ENCODE measurements at regions of chr6 and their contacts with region 1.

Region 1: DNA sequence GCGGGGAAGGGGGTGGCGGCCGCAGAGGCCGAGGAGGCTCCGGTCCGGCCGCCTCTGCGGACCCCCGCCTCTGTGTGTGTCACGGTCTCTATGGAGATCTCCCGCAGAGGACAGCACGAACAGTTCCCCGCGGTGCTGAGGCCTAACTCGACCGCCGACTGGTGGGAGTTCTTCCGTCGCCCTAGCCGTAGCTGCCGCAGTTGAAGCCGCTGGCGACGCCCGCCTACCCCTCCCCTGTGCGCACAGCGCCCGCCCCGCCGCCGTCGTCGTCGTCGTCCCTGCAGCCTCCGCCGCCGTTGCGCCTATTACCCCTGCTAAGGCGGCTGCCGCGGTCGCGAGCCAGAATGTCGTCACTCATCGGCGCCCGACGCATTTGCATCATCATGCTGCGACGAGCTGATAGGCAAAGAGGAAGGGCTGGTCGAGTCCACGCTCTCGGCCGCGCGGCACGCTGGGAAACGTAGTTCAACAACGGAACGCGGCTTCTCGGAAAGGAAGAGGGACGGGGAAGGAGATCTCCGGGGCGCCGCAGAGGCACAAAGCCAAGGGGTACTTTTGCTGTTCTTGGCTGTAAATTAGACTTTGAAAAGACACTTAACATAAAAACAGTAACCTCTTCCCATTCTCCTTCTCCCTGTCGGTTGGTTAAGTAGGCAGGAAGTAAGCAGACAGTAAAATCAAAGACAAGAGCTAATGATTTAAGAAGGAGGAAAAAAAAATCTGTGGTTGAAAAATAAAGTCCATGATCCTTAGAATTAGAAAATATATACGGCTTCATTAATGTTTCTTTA is at the start of gene NUP153:
- DNase-seq: peak; percentile 94 to 99
- H3K4me3 ChIP-seq: peak within 1 kb of the TSS; percentile 79 to 100
- H3K27ac ChIP-seq: peak within 1 kb of the TSS; percentile 99 to 100
- H3K4me1 ChIP-seq: peaks cover 5 to 18% of the 10 kb centered on the region in 2 donors
- H3K27me3 ChIP-seq: no peaks in the 10 kb centered on the region
- CTCF ChIP-seq: no peak
- total RNA-seq, gene NUP153: 11.8 TPM

Region 2: DNA sequence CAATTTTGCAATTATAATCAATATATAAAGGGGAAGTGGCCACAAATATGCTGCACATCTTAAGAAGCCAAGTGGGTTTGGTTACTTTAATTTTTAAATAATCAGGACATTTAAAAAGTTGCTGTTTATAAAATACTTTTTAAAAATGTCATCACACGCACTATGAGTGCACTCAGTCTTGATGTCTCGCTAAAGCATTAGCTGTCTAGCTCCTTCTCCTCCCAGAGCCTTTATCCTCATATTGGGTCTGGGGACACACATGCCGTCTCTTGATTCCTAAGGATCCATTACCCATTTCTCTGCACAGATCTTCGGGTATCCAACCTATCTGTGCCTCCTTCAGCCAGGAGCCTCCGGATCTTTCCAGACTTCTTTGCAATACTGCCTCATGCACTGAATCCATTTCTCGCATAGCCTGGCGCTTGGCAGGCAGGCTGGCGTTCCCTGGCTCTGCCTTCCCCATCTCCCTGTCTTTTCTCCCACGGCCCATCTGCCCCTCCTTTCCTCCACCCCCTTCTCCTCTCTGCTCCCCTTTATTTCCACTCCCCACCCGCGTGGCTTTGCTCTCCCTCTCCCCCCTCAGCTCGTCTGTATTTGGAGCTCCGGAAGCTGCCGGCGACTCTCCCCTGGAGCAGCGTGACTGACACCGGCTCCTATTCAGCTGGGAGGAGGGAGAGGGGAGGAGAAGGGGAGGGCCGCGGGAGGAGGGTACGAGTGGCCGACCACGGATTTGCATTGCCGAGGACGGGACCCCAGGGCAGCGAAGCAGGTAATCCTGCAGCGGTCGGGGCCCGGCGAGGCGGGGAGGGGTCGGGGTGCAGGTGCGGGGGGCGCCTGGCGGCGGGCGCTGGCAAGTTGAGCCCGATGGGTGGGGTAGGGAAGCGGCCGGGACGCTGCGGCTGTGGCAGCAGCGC is 313.5 kb before region 1 on chr6 and contains the start of gene CAP2:
- intact Hi-C with region 1: loop called (anchors 10 kb)
- DNase-seq: peak in 1 of 2 donors; percentile 81
- H3K4me3 ChIP-seq: peak within 1 kb of the TSS; percentile 81 to 94
- H3K27ac ChIP-seq: peak within 1 kb of the TSS; percentile 75 to 87
- H3K4me1 ChIP-seq: peaks cover 0 to 10% of the 10 kb centered on the region in 2 donors
- H3K27me3 ChIP-seq: no peaks in the 10 kb centered on the region
- CTCF ChIP-seq: no peak
- total RNA-seq, gene CAP2: 7.1 TPM

Region 3: GRCh38 chr6:17599885-17600526 is 106.8 kb before region 1 on chr6 and contains the start of gene FAM8A1:
- intact Hi-C with region 1: loop called (anchors 1 kb)
- DNase-seq: peak; percentile 74 to 96
- H3K4me3 ChIP-seq: peak within 1 kb of the TSS; percentile 94 to 98
- H3K27ac ChIP-seq: peak within 1 kb of the TSS; percentile 94 to 97
- H3K4me1 ChIP-seq: peaks cover 0 to 4% of the 10 kb centered on the region in 2 donors
- H3K27me3 ChIP-seq: no peaks in the 10 kb centered on the region
- CTCF ChIP-seq: peak; percentile 53 to 74 (median 56)
- total RNA-seq, gene FAM8A1: 31.5 TPM

Region 4: GRCh38 chr6:17638212-17638715 is 68.5 kb before region 1 on chr6:
- intact Hi-C with region 1: loop called (anchors 5 kb)
- DNase-seq: no peak
- H3K4me3 ChIP-seq: peak overlapping the region in 1 of 2 donors; percentile 35
- H3K27ac ChIP-seq: peak overlapping the region; percentile 20 to 69
- H3K4me1 ChIP-seq: peaks cover 0 to 17% of the 10 kb centered on the region in 2 donors
- H3K27me3 ChIP-seq: no peaks in the 10 kb centered on the region
- CTCF ChIP-seq: no peak

Region 5: DNA sequence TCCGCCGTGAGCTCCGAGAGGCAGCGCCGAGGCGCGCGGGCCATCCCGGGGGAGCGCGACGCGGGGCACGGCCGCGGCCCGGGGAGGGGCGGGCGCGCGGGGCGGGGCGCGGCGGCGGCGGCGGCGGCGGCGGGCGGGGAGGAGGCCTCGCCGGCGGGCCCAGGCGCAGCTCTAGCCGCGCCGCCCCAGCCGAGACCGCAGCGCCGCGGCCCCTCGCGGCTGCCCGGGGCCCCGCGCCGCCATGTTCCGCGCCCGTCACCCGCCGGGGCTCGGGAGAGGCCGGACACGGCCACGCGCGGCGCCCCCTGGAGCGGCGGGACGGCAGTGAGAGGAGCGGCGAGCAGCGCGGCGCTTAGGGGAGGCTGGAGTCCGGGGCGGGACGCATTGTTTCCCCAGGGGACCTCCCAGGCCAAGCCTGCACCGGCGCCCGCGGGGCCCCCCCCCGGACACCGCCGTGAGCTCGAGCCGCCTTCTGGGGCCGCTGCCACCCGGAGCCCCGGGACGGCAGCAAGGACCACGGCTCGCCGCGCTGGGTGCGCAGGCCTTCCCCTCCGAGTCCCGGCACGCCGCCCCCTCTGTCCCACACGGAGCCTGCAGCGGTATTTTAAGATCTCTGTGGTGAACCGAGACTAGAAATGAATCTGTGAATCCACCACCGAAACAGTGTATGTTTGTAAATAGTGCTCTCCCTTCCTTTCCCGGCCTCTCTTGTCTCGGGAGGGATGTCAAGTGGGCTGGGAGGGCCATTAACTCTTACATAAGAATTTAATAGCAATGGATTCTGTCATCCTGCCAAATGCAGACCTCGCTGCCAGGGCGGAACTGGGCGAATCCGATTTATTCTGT is 281.0 kb after region 1 on chr6 and contains the start of gene KIF13A:
- intact Hi-C with region 1: loop called (anchors 10 kb)
- DNase-seq: peak in 1 of 2 donors; percentile 86
- H3K4me3 ChIP-seq: peak within 1 kb of the TSS; percentile 81 to 84
- H3K27ac ChIP-seq: peak within 1 kb of the TSS; percentile 92 to 93
- H3K4me1 ChIP-seq: peaks cover 0 to 18% of the 10 kb centered on the region in 2 donors
- H3K27me3 ChIP-seq: no peaks in the 10 kb centered on the region
- CTCF ChIP-seq: peak in 2 of 3 experiments; percentile 20 to 42
- total RNA-seq, gene KIF13A: 28.9 TPM

Region 6: GRCh38 chr6:18155150-18155863 is 448.5 kb after region 1 on chr6 and contains the start of gene KDM1B:
- intact Hi-C with region 1: loop called (anchors 1 kb)
- DNase-seq: peak; percentile 91 to 99
- H3K4me3 ChIP-seq: peak within 1 kb of the TSS; percentile 89 to 94
- H3K27ac ChIP-seq: peak within 1 kb of the TSS; percentile 75 to 88
- H3K4me1 ChIP-seq: peaks cover 4 to 12% of the 10 kb centered on the region in 2 donors
- H3K27me3 ChIP-seq: no peaks in the 10 kb centered on the region
- CTCF ChIP-seq: no peak
- total RNA-seq, gene KDM1B: 4.9 TPM

Measured in ascending aorta (tissue), 2 donors.